Activated T-helper 1 cell treated with anti-CD3 and anti-CD28 coated beads, Interleukin-12 subunit alpha, Interleukin-12 subunit beta, Interleukin-2, Interleukin-4 antibody, amounts not matched to agents 30 ng/mL and 10 ng/mL and 1 ng/mL, durations not matched to agents 14 hours and 24 hours and 36 hours (primary cell): ENCODE measurements at regions of chr19 and their contacts with region 1.

Region 1: GRCh38 chr19:47284324-47284899 is 9.7 kb downstream of the INAFM1 start:
- DNase-seq: peak; percentile 30
- H3K4me3 Mint-ChIP-seq: no peak overlapping the region
- H3K27ac Mint-ChIP-seq: no peak overlapping the region
- H3K4me1 Mint-ChIP-seq: peaks cover 13% of the 10 kb centered on the region
- H3K27me3 Mint-ChIP-seq: no peaks in the 10 kb centered on the region

Region 2: GRCh38 chr19:46954993-46955812 is 329.2 kb before region 1 on chr19:
- intact Hi-C with region 1: no loop called
- DNase-seq: peak; percentile 43
- H3K4me3 Mint-ChIP-seq: peak overlapping the region; percentile 88
- H3K27ac Mint-ChIP-seq: peak overlapping the region; percentile 93
- H3K4me1 Mint-ChIP-seq: peaks cover 79% of the 10 kb centered on the region
- H3K27me3 Mint-ChIP-seq: no peaks in the 10 kb centered on the region

Region 3: DNA sequence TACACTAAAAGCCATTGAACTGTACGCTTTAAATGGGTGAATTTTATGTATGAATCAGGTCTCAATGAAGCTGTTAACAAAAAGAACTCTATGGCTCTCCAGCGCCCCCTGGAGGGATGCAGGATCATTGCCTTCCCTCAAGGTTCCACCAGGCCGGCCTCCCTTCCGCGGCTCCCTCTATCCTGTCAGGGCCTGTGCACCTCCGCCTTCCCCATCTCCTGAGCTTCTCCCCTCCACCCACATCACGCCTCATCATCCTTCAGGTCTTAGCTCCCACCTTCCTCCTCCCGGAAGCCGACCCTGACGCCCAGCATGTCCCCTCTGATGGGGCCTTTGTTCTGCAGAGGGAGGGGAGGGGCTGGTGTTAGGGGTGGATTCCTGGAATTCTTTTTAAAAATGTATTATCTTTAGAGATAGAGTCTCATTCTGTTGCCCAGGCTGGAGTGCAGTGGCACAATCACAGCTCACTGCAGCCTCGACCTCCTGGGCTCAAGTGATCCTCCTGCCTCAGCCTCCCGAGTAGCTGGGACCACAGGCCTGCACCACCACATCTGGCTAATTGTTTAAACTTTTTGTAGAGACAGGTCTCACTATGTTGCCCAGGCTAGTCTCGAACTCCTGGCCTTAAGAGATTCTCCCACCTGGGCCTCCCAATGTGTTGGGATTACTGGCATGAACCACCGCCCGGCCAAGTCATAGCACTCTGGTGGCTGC is 107.3 kb after region 1 on chr19:
- intact Hi-C with region 1: loop called (anchors 1 kb)
- DNase-seq: peak; percentile 61
- H3K4me3 Mint-ChIP-seq: no peak overlapping the region
- H3K27ac Mint-ChIP-seq: no peak overlapping the region
- H3K4me1 Mint-ChIP-seq: no peaks in the 10 kb centered on the region
- H3K27me3 Mint-ChIP-seq: peaks cover 7% of the 10 kb centered on the region